ENCODE measurements at regions of chr3 and their contacts with region 1.

Region 1: GRCh38 chr3:14947886-14948555 is 638 bp downstream of the NR2C2 start:
- DNase-seq: peak; percentile 95
- H3K4me3 Mint-ChIP-seq: peak overlapping the region; percentile 99
- H3K27ac Mint-ChIP-seq: peak overlapping the region; percentile 99
- H3K4me1 Mint-ChIP-seq: peaks cover 24% of the 10 kb centered on the region
- H3K27me3 Mint-ChIP-seq: no peaks in the 10 kb centered on the region
- CTCF ChIP-seq: no peak

Region 2: GRCh38 chr3:15098503-15099363 is 150.7 kb after region 1 on chr3 and contains the start of gene RBSN:
- CTCF ChIA-PET with region 1: no interaction called
- POLR2A ChIA-PET with region 1: interaction called, 11 read pairs
- intact Hi-C with region 1: no loop called
- DNase-seq: peak; percentile 94
- H3K4me3 Mint-ChIP-seq: peak within 1 kb of the TSS; percentile 84
- H3K27ac Mint-ChIP-seq: peak within 1 kb of the TSS; percentile 82
- H3K4me1 Mint-ChIP-seq: peaks cover 30% of the 10 kb centered on the region
- H3K27me3 Mint-ChIP-seq: no peaks in the 10 kb centered on the region
- CTCF ChIP-seq: no peak
- total RNA-seq, gene RBSN: 37.7 and 39.6 TPM in 2 replicates

Measured in MCF 10A (cell line).